ENCODE measurements at regions of chr1 and their contacts with region 1.

Region 1: GRCh38 chr1:151340870-151341754 is 5.9 kb downstream of the RFX5 start:
- DNase-seq: peak in 8 of 9 experiments; percentile 24 to 86 (median 54)
- ATAC-seq: peak; percentile 92
- H3K4me3 ChIP-seq: no peak overlapping the region
- H3K4me3 Mint-ChIP-seq: no peak overlapping the region
- H3K27ac ChIP-seq: peak overlapping the region in 1 of 2 experiments; percentile 42
- H3K27ac Mint-ChIP-seq: peak overlapping the region; percentile 50
- H3K4me1 ChIP-seq: peaks cover 6% of the 10 kb centered on the region
- H3K4me1 Mint-ChIP-seq: peaks cover 26% of the 10 kb centered on the region
- H3K27me3 ChIP-seq: no peaks in the 10 kb centered on the region
- H3K27me3 Mint-ChIP-seq: no peaks in the 10 kb centered on the region
- CTCF ChIP-seq: peak; percentile 81

Region 2: DNA sequence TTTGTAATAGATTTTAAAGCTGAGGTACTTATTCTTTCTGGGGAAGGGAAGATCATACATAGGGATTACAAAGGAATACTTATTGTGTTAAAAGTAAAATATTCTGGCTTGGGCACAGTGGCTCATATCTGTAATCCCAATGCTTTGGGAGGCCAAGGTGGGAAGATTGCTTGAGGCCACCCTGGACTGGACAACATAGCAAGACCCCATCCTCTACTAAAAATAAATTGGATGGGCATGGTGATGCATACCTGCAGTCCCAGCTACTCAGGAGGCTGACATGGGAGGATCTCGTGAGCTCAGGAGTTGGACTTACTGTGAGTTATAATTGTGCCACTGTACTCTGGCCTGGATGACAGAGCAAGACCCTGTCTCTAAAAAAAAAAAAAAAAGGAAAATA is 243.0 kb before region 1 on chr1:
- CTCF ChIA-PET with region 1: interaction called, 3 read pairs
- POLR2A ChIA-PET with region 1: no interaction called
- intact Hi-C with region 1: loop called in 1 of 2 experiments (anchors 5 kb)
- DNase-seq: no peak
- ATAC-seq: no peak
- H3K4me3 ChIP-seq: no peak overlapping the region
- H3K4me3 Mint-ChIP-seq: no peak overlapping the region
- H3K27ac ChIP-seq: no peak overlapping the region
- H3K27ac Mint-ChIP-seq: no peak overlapping the region
- H3K4me1 ChIP-seq: no peaks in the 10 kb centered on the region
- H3K4me1 Mint-ChIP-seq: no peaks in the 10 kb centered on the region
- H3K27me3 ChIP-seq: no peaks in the 10 kb centered on the region
- H3K27me3 Mint-ChIP-seq: no peaks in the 10 kb centered on the region
- CTCF ChIP-seq: no peak

Region 3: GRCh38 chr1:151292207-151293030 is 48.7 kb before region 1 on chr1:
- CTCF ChIA-PET with region 1: interaction called, 160 read pairs
- POLR2A ChIA-PET with region 1: interaction called, 3 read pairs
- intact Hi-C with region 1: no loop called
- DNase-seq: peak in 3 of 9 experiments; percentile 24 to 54 (median 25)
- ATAC-seq: peak; percentile 46
- H3K4me3 ChIP-seq: no peak overlapping the region
- H3K4me3 Mint-ChIP-seq: no peak overlapping the region
- H3K27ac ChIP-seq: peak overlapping the region in 1 of 2 experiments; percentile 25
- H3K27ac Mint-ChIP-seq: peak overlapping the region; percentile 76
- H3K4me1 ChIP-seq: no peaks in the 10 kb centered on the region
- H3K4me1 Mint-ChIP-seq: peaks cover 13% of the 10 kb centered on the region
- H3K27me3 ChIP-seq: no peaks in the 10 kb centered on the region
- H3K27me3 Mint-ChIP-seq: no peaks in the 10 kb centered on the region
- CTCF ChIP-seq: no peak

Region 4: DNA sequence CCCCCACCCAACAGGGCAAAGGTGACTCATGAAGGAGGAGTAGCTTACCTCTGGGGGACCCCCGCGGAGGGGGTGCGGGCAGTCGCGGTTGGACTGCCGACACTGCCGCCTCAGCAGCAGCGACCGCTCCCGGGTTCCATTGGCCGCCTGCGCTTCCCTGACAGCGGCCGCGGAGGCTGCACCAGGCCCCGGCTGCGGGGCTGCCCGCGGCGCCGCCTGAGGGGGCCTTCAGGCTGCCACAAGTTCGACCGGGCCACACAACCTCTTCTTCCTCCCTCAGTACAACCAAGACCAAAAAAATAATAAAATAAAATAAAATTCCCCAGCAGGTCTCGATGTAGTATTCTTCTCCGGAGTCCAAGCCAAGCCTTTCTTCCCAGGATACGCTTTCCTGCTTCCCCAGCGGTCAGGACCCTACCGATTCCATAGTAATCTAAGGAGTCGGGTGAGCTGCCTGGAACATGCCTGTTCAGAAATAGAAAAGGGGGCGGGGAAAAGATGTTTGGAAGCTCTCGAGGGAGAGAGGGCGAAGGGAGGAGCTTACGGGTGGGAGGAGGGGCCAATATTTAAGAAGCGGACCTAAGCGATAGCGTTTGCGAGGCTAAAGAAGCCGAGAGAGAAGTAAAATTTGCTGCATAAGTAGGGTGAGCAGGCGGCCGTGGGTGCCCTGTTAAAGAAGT is 13.7 kb before region 1 on chr1 and contains the start of gene PI4KB:
- CTCF ChIA-PET with region 1: interaction called, 29 read pairs
- POLR2A ChIA-PET with region 1: interaction called, 20 read pairs
- intact Hi-C with region 1: loop called in 1 of 2 experiments (anchors 1 kb)
- DNase-seq: peak; percentile 76 to 98 (median 87)
- ATAC-seq: peak; percentile 93
- H3K4me3 ChIP-seq: peak within 1 kb of the TSS; percentile 67 to 86
- H3K4me3 Mint-ChIP-seq: peak within 1 kb of the TSS; percentile 88
- H3K27ac ChIP-seq: peak within 1 kb of the TSS; percentile 75 to 98
- H3K27ac Mint-ChIP-seq: peak within 1 kb of the TSS; percentile 93
- H3K4me1 ChIP-seq: peaks cover 15% of the 10 kb centered on the region
- H3K4me1 Mint-ChIP-seq: peaks cover 47% of the 10 kb centered on the region
- H3K27me3 ChIP-seq: no peaks in the 10 kb centered on the region
- H3K27me3 Mint-ChIP-seq: no peaks in the 10 kb centered on the region
- CTCF ChIP-seq: no peak
- total RNA-seq, gene PI4KB: 63.1 to 63.2 TPM

Region 5: GRCh38 chr1:151399890-151400495 is 58.9 kb after region 1 on chr1:
- CTCF ChIA-PET with region 1: interaction called, 9 read pairs
- POLR2A ChIA-PET with region 1: interaction called, 4 read pairs
- intact Hi-C with region 1: loop called in 1 of 2 experiments (anchors 1 kb)
- DNase-seq: peak in 1 of 9 experiments; percentile 13
- ATAC-seq: no peak
- H3K4me3 ChIP-seq: peak overlapping the region; percentile 90 to 94
- H3K4me3 Mint-ChIP-seq: peak overlapping the region; percentile 89
- H3K27ac ChIP-seq: peak overlapping the region; percentile 93 to 94
- H3K27ac Mint-ChIP-seq: peak overlapping the region; percentile 97
- H3K4me1 ChIP-seq: peaks cover 16% of the 10 kb centered on the region
- H3K4me1 Mint-ChIP-seq: peaks cover 27% of the 10 kb centered on the region
- H3K27me3 ChIP-seq: no peaks in the 10 kb centered on the region
- H3K27me3 Mint-ChIP-seq: no peaks in the 10 kb centered on the region
- CTCF ChIP-seq: no peak

Region 6: DNA sequence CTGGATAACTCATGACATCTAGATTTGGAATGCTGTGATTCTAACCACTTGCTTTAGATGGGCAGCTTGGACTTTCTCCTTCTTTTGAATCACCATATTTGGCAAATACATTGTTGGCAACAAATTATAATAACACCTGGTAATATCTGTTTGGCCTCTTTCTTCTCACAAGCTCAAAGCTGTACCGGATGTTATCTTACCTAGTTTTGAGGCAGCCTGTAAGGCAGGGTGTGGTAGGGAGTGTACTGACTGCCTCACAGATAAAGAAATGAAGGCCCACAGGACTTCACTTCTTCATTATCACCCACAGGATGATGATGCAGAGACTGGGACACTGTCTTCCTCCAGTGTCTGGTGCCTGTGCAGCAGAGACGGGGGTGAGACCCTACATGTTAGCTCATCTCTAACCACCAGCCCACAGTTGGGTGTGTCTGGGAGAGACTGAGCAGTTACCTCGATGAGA is 227.5 kb after region 1 on chr1:
- CTCF ChIA-PET with region 1: no interaction called
- POLR2A ChIA-PET with region 1: no interaction called
- intact Hi-C with region 1: no loop called
- DNase-seq: peak in 6 of 9 experiments; percentile 0 to 67 (median 34)
- ATAC-seq: peak; percentile 88
- H3K4me3 ChIP-seq: no peak overlapping the region
- H3K4me3 Mint-ChIP-seq: no peak overlapping the region
- H3K27ac ChIP-seq: no peak overlapping the region
- H3K27ac Mint-ChIP-seq: no peak overlapping the region
- H3K4me1 ChIP-seq: no peaks in the 10 kb centered on the region
- H3K4me1 Mint-ChIP-seq: no peaks in the 10 kb centered on the region
- H3K27me3 ChIP-seq: no peaks in the 10 kb centered on the region
- H3K27me3 Mint-ChIP-seq: no peaks in the 10 kb centered on the region
- CTCF ChIP-seq: no peak

Region 7: DNA sequence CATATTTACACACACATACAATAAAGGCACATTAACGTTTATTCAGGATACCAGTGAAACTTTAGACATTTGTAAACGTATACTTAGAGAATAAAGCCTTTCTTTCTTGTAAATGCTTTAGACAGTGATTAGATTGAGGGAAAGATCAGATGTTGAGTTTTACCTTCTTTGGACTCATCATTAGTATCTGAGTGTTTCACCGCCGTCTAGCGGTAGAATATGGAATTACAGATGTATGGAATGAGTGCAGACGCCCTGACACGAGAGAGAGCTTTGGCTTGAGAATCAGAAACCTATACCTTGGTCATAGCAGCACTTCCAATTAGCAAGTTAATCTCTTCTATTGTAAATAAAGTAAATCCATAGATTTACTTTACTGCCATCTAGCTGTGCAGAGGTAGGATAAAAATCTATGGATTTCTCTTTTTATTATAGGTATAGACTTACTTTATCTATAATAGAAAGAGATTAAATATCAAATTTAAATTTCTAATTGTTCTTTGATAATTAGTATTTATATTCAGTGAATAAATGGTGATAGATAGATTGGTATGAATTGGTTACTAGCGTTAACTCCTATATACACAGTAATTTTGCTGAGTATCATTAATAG is 1006.1 kb after region 1 on chr1:
- CTCF ChIA-PET with region 1: no interaction called
- POLR2A ChIA-PET with region 1: no interaction called
- intact Hi-C with region 1: no loop called
- DNase-seq: peak in 8 of 9 experiments; percentile 5 to 71 (median 36)
- ATAC-seq: peak; percentile 58
- H3K4me3 ChIP-seq: no peak overlapping the region
- H3K4me3 Mint-ChIP-seq: no peak overlapping the region
- H3K27ac ChIP-seq: no peak overlapping the region
- H3K27ac Mint-ChIP-seq: no peak overlapping the region
- H3K4me1 ChIP-seq: no peaks in the 10 kb centered on the region
- H3K4me1 Mint-ChIP-seq: no peaks in the 10 kb centered on the region
- H3K27me3 ChIP-seq: no peaks in the 10 kb centered on the region
- H3K27me3 Mint-ChIP-seq: peaks cover 8% of the 10 kb centered on the region
- CTCF ChIP-seq: peak; percentile 98

Measured in CD8-positive, alpha-beta T cell (primary cell).